ENCODE measurements at regions of chr17 and their contacts with region 1.

Region 1: DNA sequence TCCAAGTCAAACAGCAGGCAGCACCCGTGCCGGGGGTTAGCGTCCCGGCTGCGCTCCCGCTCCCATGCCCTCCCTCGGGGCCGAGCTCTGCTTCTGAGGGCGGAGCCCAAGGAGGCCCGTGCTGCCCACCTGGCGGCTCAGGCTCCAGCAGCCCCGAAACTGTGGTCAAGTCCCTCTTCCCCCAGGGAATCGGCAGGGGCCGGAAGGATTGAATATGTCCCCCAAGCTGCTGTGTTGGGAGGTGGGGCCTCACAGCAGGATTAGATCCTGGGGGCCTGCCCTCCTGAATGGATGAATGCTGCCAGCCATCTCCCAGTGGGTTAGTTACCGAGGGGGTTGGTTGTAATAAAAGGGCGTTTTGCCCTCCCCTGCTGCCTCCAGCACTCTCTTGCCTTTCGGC is 33.9 kb downstream of the MAP2K3 start:
- DNase-seq: no peak
- ATAC-seq: no peak
- H3K4me3 ChIP-seq: no peak overlapping the region
- H3K27ac ChIP-seq: no peak overlapping the region
- H3K4me1 ChIP-seq: peaks cover 0 to 10% (median 3%) of the 10 kb centered on the region in 12 donors
- H3K27me3 ChIP-seq: no peaks in the 10 kb centered on the region
- CTCF ChIP-seq: no peak
- POLR2A ChIP-seq: no peak

Region 2: GRCh38 chr17:21275579-21276263 is 42.7 kb before region 1 on chr17:
- intact Hi-C with region 1: loop called in 5 of 10 experiments (anchors 5 to 10 kb)
- DNase-seq: peak; percentile 95 to 98 (median 96)
- ATAC-seq: peak; percentile 94 to 98 (median 97)
- H3K4me3 ChIP-seq: peak overlapping the region; percentile 40 to 81 (median 64)
- H3K27ac ChIP-seq: peak overlapping the region; percentile 14 to 87 (median 74)
- H3K4me1 ChIP-seq: peaks cover 0 to 36% (median 16%) of the 10 kb centered on the region in 12 donors
- H3K27me3 ChIP-seq: no peaks in the 10 kb centered on the region
- CTCF ChIP-seq: peak in 3 of 12 donors; percentile 8 to 10 (median 9)
- POLR2A ChIP-seq: peak in 1 of 2 donors; percentile 60

Region 3: GRCh38 chr17:21284319-21285163 is 33.9 kb before region 1 on chr17 and contains the start of gene MAP2K3:
- intact Hi-C with region 1: loop called in 5 of 10 experiments (anchors 5 to 10 kb)
- DNase-seq: peak; percentile 99 to 100 (median 100)
- ATAC-seq: peak; percentile 79 to 89 (median 86)
- H3K4me3 ChIP-seq: peak within 1 kb of the TSS; percentile 49 to 99 (median 92)
- H3K27ac ChIP-seq: peak within 1 kb of the TSS; percentile 83 to 99 (median 94)
- H3K4me1 ChIP-seq: peaks cover 16 to 72% (median 50%) of the 10 kb centered on the region in 12 donors
- H3K27me3 ChIP-seq: no peaks in the 10 kb centered on the region
- CTCF ChIP-seq: peak in 1 of 12 donors; percentile 12
- POLR2A ChIP-seq: peak; percentile 90 to 99
- total RNA-seq, gene MAP2K3: 29.4 to 170 (median 54.4) TPM

Region 4: GRCh38 chr17:21376759-21377690 is 58.6 kb after region 1 on chr17:
- intact Hi-C with region 1: loop called in 3 of 10 experiments (anchors 2 to 10 kb)
- DNase-seq: no peak
- ATAC-seq: peak in 3 of 4 donors; percentile 12 to 52 (median 27)
- H3K4me3 ChIP-seq: peak overlapping the region; percentile 51 to 85 (median 59)
- H3K27ac ChIP-seq: peak overlapping the region in 10 of 12 donors; percentile 56 to 85 (median 68)
- H3K4me1 ChIP-seq: peaks cover 0 to 68% (median 26%) of the 10 kb centered on the region in 12 donors
- H3K27me3 ChIP-seq: peaks cover 0 to 31% (median 0%) of the 10 kb centered on the region in 9 donors
- CTCF ChIP-seq: no peak
- POLR2A ChIP-seq: no peak

Measured in heart left ventricle (tissue), 16 donors.